AG04449 (cell line): ENCODE measurements at regions of chr10 and their contacts with region 1.

Region 1: DNA sequence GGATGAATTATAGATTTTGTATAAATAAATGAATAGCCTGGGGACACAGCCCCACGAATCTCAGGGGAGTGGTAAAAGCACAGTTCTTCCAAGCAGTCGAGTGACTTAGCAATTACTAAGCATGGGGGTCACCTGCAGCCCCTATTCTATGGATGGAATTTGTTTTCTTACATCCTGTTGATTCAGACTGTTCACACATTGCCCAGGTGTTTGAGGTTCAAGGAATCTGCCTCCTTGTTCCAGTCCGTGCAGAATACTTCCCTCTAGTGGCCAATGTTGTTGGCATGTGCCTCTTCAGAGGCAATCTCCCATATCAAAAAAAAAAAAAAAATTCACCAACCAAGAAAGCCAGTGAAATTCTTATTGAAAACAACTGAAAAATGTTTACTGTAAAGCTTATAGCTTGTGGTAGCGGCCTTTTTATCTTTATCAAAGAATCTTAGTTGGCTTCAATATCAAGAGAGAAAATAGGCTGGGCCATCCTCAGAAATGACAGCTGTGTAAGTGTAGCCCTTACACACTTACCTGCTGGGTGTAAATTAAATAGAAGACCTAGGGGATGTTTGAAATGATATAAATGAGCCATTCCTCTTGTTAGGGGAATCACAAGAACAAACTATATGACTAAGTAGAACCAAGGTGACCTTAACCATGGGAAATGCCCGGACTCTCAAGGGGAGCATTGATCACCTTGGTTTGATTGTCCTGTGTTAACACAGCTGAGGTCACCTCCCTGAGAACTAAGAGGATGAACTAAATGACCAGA is 7.8 kb downstream of the LIPM start:
- DNase-seq: no peak
- H3K4me3 ChIP-seq: no peak overlapping the region
- CTCF ChIP-seq: peak; percentile 61

Region 2: DNA sequence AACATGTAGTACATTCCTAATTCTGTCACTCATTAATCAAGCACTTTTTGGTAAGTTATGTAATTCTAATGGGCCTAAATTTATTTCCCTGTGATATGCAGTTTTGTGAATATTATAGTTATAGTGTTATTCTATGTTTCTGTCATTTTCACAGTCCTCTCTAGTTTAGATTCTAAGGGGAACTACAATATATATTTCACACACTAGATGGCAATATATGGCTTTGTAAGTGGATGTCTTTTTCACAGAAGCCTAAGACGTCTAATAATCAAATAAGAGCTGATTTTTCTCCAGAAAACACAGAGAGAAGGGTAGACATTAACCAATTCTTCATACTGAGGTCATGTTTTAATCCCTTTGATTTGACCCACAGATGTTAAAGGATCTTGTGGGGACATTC is 245.3 kb before region 1 on chr10:
- CTCF ChIA-PET with region 1: interaction called, 217 read pairs
- POLR2A ChIA-PET with region 1: no interaction called
- DNase-seq: no peak
- H3K4me3 ChIP-seq: no peak overlapping the region
- CTCF ChIP-seq: peak; percentile 14

Region 3: GRCh38 chr10:88582806-88583583 is 227.4 kb before region 1 on chr10 and contains the start of gene RNLS:
- CTCF ChIA-PET with region 1: interaction called, 13 read pairs
- POLR2A ChIA-PET with region 1: no interaction called
- DNase-seq: no peak
- H3K4me3 ChIP-seq: peak within 1 kb of the TSS; percentile 59
- CTCF ChIP-seq: peak; percentile 88

Region 4: DNA sequence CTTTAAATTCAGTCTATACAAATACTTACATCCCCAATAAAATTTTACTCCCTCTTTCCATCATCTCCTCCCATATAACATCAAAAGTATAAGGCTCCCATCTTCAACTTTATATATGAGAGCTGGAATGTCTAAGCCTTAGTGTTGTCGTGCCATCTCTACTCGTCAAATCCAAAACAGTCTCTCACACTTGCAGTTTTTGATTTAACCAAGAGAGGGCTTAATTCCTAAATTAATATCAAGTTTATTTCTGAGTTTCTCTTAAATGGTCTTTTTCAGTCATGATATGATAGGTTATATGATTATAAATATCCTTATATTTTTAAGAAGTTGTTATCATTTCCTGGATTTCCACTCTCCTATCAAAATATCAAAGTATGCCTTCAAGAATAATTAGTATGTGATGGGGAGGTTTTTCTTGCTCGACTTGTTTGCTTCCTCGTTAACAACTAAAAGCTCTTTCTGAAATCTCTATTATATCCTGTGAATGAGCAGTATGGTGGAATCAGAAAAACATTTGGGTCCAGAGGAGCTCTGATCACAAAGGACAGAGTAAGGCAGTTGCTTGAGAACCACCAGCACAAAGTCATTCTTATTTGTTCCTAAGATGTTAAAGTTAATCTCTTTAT is 116.9 kb before region 1 on chr10:
- CTCF ChIA-PET with region 1: interaction called, 57 read pairs
- POLR2A ChIA-PET with region 1: no interaction called
- DNase-seq: no peak
- H3K4me3 ChIP-seq: no peak overlapping the region
- CTCF ChIP-seq: peak; percentile 13

Region 5: GRCh38 chr10:88793747-88794299 is 16.6 kb before region 1 on chr10:
- CTCF ChIA-PET with region 1: interaction called, 26 read pairs
- POLR2A ChIA-PET with region 1: no interaction called
- DNase-seq: no peak
- H3K4me3 ChIP-seq: no peak overlapping the region
- CTCF ChIP-seq: no peak

Region 6: DNA sequence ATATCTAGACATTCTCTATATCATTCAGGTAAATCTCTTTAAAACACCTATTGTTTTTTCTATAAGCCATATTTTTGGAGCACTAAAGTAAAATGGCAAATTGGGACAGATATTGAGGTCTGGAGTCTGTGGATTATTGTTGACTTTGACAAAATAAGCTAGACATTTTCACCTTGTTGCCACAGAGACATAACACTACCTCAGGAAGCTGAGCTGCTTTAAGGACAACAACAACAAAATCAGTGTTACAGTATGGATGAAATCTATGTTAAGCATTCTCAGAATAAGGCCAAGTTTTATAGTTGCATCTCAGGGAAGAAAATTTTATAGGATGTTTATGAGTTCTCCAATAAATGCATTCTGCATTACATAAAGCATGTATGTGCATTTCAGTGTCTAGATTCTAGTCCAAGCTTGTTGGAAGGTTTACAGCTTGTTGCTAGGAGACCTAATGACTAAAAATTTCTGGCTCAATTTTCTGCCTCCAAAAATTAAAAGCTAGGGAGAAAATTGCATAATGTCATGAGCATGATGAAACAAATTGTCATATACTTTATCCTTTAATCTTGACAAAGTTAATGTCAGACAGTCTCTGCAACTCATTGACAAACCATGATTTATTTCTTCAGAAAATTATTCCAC is 10.5 kb after region 1 on chr10:
- CTCF ChIA-PET with region 1: interaction called, 48 read pairs
- POLR2A ChIA-PET with region 1: no interaction called
- DNase-seq: peak; percentile 44
- H3K4me3 ChIP-seq: no peak overlapping the region
- CTCF ChIP-seq: no peak

Region 7: DNA sequence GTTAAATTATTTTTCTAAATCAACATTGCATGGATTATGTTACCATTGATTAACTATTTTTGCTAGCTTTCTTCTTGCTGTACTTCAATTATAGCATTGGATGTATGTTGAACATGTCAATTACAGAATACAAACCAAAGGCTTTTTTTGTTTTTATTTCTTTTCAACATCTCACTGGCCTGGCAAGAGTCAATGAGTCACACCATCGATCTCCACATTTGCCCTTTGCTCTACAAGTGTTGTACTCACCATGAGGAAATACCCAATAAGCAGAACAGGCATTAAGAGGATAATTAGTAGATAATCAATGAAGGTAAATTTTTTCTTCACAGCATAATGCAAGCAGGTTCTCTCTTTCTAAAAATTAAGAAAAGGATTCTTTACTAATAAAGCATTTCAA is 17.9 kb after region 1 on chr10:
- CTCF ChIA-PET with region 1: interaction called, 48 read pairs
- POLR2A ChIA-PET with region 1: no interaction called
- DNase-seq: no peak
- H3K4me3 ChIP-seq: no peak overlapping the region
- CTCF ChIP-seq: no peak

Region 8: DNA sequence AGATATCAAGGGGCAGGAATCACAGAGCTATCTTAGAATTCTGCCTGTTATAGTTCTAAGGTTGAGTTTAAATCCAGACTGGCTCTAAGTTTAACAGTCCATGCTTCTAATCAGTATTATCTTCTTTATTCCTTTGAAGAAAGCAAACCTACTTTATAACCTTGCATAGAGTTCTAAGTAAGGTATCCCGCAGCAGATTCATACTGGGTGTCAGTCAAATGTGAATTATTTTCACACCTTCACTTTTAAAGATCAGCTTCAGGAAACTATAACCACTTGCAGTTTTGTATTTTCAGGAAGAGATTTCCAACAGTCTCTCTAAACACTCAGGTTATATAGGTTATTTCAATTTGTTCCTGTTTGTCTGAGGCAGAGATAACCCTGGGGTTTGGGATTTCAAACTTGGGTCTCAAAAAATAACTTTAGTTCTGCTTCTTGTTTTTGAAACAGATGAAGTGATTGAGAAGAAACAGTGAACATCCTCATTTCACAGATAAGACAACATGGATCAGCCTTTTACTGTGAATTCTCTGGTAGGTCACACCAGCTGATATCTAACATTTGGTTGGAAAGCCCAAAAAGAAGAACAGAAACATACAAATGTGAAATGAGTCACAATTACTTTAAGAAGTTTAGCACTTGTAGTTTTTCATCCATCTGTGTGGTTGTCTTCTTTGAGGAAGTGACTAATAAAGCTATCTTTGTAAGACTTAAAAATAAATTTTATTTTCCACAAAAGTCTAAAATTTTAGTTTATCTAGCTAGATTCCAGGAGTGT is 91.0 kb after region 1 on chr10:
- CTCF ChIA-PET with region 1: no interaction called
- POLR2A ChIA-PET with region 1: no interaction called
- DNase-seq: no peak
- H3K4me3 ChIP-seq: no peak overlapping the region
- CTCF ChIP-seq: no peak

Region 9: GRCh38 chr10:89207181-89207800 is 396.9 kb after region 1 on chr10 and contains the start of gene CH25H:
- CTCF ChIA-PET with region 1: no interaction called
- POLR2A ChIA-PET with region 1: no interaction called
- DNase-seq: no peak
- H3K4me3 ChIP-seq: peak within 1 kb of the TSS; percentile 66
- CTCF ChIP-seq: no peak